ENCODE measurements at regions of chr18 and their contacts with region 1.

Region 1: DNA sequence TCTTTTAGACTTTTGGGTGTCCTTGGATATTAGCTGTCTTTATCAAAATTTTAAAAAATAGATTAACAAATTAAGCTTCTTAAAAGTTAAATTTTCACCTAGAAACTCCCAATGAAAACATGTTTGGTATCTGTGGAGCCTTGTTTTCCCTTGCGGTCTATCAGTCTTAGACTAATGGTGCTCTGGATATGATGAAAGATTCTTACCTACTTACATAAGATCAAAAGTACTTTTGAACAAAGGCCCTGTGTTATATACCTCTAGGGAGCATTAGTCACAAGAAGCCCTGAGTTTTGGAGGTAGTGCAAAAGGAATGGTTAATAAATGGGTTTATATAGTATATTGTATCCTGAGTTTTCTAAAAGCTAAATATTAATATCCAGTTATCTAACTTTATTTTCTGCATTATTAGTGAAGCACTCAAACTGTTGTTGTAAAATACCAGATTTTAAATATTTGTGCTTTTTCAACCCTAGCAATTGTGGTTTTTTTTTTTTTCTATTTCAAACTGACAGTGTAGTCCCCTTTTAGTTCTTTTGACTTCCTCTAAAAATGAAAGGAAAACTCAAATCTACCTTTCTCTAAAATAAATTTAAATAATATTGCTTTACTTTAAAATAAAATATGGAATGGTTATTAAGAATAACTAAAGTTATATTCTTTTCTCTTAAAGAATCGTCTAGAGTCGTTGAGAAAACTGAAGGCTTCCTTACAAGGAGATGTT is 18.1 kb downstream of the NDC80 start:
- DNase-seq: no peak
- ATAC-seq: peak; percentile 46; the same call in 2 of the 3 replicates
- H3K4me3 ChIP-seq: no peak overlapping the region
- H3K27ac ChIP-seq: no peak overlapping the region
- H3K4me1 ChIP-seq: no peaks in the 10 kb centered on the region
- H3K27me3 ChIP-seq: no peaks in the 10 kb centered on the region
- CTCF ChIP-seq: no peak
- EP300 ChIP-seq: no peak
- POLR2A ChIP-seq: no peak
- RAD21 ChIP-seq: no peak

Region 2: DNA sequence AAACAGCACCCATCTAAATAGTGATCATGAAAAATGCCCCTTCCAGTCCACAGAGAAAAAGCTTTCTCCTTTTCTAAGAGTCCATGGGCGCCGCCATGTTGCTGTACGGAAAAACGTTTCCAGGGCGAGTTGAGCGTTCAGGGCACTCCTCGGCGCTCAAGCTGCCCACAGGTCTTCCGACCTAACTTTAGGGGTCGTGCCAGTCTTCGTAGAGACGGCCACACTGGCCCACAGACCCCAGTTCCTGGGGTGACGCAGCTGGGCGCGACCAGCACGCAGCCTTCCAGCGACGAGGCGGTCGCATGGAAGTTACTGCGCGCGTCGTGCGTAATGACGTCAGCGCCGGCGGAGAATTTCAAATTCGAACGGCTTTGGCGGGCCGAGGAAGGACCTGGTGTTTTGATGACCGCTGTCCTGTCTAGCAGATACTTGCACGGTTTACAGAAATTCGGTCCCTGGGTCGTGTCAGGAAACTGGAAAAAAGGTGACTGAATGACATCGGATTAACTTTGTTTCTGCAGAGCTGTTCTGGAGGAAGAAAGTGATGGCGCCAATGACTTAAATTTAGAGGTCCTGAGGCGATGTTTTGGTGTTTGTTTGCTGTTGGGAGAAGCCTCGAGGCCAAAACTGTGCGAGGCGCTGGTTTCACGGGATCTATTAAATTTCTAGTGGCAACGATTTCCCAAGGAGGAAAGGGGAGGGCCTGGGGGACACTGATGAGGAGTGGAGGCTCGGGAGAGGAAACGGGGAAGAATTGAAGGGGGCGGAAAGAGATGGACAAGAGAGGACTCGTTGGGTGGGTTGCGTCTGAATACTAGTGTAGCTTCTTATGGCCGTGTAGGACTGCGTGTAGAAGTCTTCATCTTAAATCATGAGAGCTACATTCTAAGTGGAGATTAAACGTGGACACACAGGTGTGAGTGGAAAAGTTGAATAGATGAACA is 18.0 kb before region 1 on chr18 and contains the starts of genes METTL4 and NDC80:
- CTCF ChIA-PET with region 1: no interaction called
- POLR2A ChIA-PET with region 1: interaction called, 18 read pairs
- in situ Hi-C with region 1: no loop called
- intact Hi-C with region 1: no loop called
- DNase-seq: peak; percentile 86 to 97 (median 87)
- ATAC-seq: peak; percentile 79
- H3K4me3 ChIP-seq: peak within 1 kb of the TSS; percentile 61
- H3K27ac ChIP-seq: peak within 1 kb of the TSS; percentile 98
- H3K4me1 ChIP-seq: peaks cover 10 to 18% of the 10 kb centered on the region in 2 experiments; a peak in 3 of 5 replicates
- H3K27me3 ChIP-seq: no peaks in the 10 kb centered on the region
- CTCF ChIP-seq: 0 out of 6 replicates have a peak, but pooled peaks of 1 of the 3 experiments have one; percentile 9
- EP300 ChIP-seq: peak; percentile 55
- POLR2A ChIP-seq: peak; percentile 86
- RAD21 ChIP-seq: no peak
- polyA plus RNA-seq, gene METTL4: 27.1 to 32.8 TPM
- polyA plus RNA-seq, gene NDC80: 89.3 to 97.9 TPM

Region 3: GRCh38 chr18:2857491-2858131 is 268.1 kb after region 1 on chr18:
- CTCF ChIA-PET with region 1: no interaction called
- POLR2A ChIA-PET with region 1: no interaction called
- in situ Hi-C with region 1: no loop called
- intact Hi-C with region 1: no loop called
- DNase-seq: peak in 1 of 4 experiments; percentile 31
- ATAC-seq: no peak
- H3K4me3 ChIP-seq: no peak overlapping the region
- H3K27ac ChIP-seq: no peak overlapping the region
- H3K4me1 ChIP-seq: peaks cover 39 to 53% of the 10 kb centered on the region in 2 experiments
- H3K27me3 ChIP-seq: no peaks in the 10 kb centered on the region
- CTCF ChIP-seq: no peak
- EP300 ChIP-seq: no peak
- POLR2A ChIP-seq: no peak
- RAD21 ChIP-seq: no peak

Measured in K562 (cell line).